ENCODE measurements at regions of chr1 and their contacts with region 1.

Region 1: GRCh38 chr1:207963427-207964194 is 52.7 kb upstream of the CD34 start:
- DNase-seq: peak; percentile 79 to 88 (median 81)
- H3K4me3 ChIP-seq: peak overlapping the region; percentile 74
- H3K4me3 Mint-ChIP-seq: peak overlapping the region; percentile 75 to 89 (median 87)
- H3K27ac ChIP-seq: peak overlapping the region; percentile 65
- H3K27ac Mint-ChIP-seq: peak overlapping the region in 5 of 8 donors; percentile 52 to 89 (median 70)
- H3K4me1 ChIP-seq: peaks cover 5% of the 10 kb centered on the region
- H3K4me1 Mint-ChIP-seq: peaks cover 11 to 22% (median 14%) of the 10 kb centered on the region in 3 donors
- H3K27me3 ChIP-seq: peaks cover 12% of the 10 kb centered on the region
- H3K27me3 Mint-ChIP-seq: peaks cover 14 to 26% of the 10 kb centered on the region in 2 donors

Region 2: GRCh38 chr1:207797229-207797961 is 166.2 kb before region 1 on chr1:
- CTCF ChIA-PET with region 1: interaction called, 26 read pairs
- POLR2A ChIA-PET with region 1: no interaction called
- DNase-seq: peak; percentile 39 to 82 (median 55)
- H3K4me3 ChIP-seq: no peak overlapping the region
- H3K4me3 Mint-ChIP-seq: no peak overlapping the region
- H3K27ac ChIP-seq: no peak overlapping the region
- H3K27ac Mint-ChIP-seq: peak overlapping the region in 2 of 8 donors; percentile 6 to 40
- H3K4me1 ChIP-seq: peaks cover 23% of the 10 kb centered on the region
- H3K4me1 Mint-ChIP-seq: peaks cover 41 to 51% (median 48%) of the 10 kb centered on the region in 3 donors
- H3K27me3 ChIP-seq: no peaks in the 10 kb centered on the region
- H3K27me3 Mint-ChIP-seq: no peaks in the 10 kb centered on the region

Region 3: GRCh38 chr1:207868774-207869721 is 94.6 kb before region 1 on chr1:
- CTCF ChIA-PET with region 1: interaction called, 20 read pairs
- POLR2A ChIA-PET with region 1: no interaction called
- DNase-seq: peak; percentile 66 to 81 (median 74)
- H3K4me3 ChIP-seq: peak overlapping the region; percentile 71
- H3K4me3 Mint-ChIP-seq: peak overlapping the region; percentile 93 to 98 (median 96)
- H3K27ac ChIP-seq: peak overlapping the region; percentile 83
- H3K27ac Mint-ChIP-seq: peak overlapping the region; percentile 66 to 97 (median 92)
- H3K4me1 ChIP-seq: peaks cover 84% of the 10 kb centered on the region
- H3K4me1 Mint-ChIP-seq: peaks cover 47 to 84% (median 48%) of the 10 kb centered on the region in 3 donors
- H3K27me3 ChIP-seq: no peaks in the 10 kb centered on the region
- H3K27me3 Mint-ChIP-seq: peaks cover 0 to 1% of the 10 kb centered on the region in 2 donors

Region 4: DNA sequence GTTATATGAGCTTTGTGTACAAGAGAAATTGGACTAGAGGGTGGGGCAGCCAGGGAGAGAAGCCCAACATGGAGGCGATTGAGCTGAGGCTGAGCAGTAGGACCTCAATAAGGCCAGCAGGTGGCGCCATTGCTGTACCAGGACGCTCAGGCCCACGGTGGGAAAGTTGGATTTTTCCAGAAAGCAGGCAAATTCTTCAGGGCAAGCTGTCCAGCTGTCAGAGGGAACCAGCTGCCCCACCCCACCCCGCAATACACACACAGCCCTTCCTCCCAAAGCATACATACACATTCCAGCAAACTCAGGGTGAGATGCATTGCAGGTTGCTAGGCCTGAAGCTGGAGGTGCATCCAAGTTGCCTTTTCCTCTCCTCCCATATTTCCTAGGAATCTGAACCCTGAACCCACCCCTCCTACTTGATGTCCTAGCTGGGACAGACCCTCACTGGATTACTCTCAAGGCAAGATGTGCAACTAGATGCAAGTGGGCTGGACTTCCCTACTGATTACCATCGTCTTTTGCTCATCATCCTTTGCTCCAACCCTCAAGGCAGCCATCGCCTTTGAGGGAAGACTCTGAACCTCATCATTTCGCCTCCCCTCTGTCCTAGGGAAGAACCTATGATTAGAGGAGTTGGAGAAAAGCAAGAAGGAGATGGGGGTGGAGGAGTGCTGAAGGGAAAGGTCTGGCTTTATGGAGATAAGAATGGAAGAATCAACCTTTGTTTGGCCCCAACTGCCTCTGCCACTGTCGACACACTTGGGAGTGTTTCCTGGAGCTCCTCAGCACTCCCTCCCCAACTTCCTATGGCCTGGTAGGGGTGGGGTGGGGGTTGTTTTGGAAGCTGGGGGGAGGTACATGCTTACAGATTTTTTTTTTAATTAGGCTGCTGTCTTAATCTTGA is 78.2 kb before region 1 on chr1:
- CTCF ChIA-PET with region 1: interaction called, 92 read pairs
- POLR2A ChIA-PET with region 1: interaction called, 4 read pairs
- DNase-seq: peak; percentile 58 to 79 (median 61)
- H3K4me3 ChIP-seq: no peak overlapping the region
- H3K4me3 Mint-ChIP-seq: peak overlapping the region in 3 of 7 donors; percentile 10 to 36 (median 21)
- H3K27ac ChIP-seq: no peak overlapping the region
- H3K27ac Mint-ChIP-seq: peak overlapping the region in 7 of 8 donors; percentile 59 to 96 (median 79)
- H3K4me1 ChIP-seq: peaks cover 28% of the 10 kb centered on the region
- H3K4me1 Mint-ChIP-seq: peaks cover 33 to 38% (median 37%) of the 10 kb centered on the region in 3 donors
- H3K27me3 ChIP-seq: no peaks in the 10 kb centered on the region
- H3K27me3 Mint-ChIP-seq: peaks cover 8 to 18% of the 10 kb centered on the region in 2 donors

Region 5: DNA sequence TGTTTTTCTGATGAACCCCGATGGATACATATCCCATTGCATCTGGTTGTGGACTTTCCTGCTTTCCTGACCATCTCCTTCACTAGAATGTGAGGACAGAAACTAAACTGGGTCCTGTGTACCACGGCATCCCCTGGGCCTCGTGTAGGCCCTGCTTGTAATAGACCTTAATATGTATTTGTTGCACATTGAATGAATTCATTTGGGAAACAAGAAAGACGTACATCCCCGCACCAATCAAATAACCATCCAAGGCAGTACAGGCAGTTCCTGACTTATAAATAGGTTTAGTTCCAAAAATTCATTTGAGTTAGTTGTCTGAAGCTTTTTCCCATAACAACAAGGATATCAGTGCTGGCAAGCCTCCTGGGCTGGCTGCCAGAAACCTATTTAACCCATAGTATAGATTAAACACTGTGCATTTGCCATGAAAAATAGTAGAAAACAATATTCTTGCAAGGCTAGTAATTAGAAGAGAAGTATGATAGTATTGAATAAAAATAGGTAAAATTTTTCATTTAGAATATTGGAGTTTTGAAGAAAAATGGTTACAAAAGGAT is 29.1 kb after region 1 on chr1:
- CTCF ChIA-PET with region 1: no interaction called
- POLR2A ChIA-PET with region 1: no interaction called
- DNase-seq: no peak
- H3K4me3 ChIP-seq: no peak overlapping the region
- H3K4me3 Mint-ChIP-seq: no peak overlapping the region
- H3K27ac ChIP-seq: no peak overlapping the region
- H3K27ac Mint-ChIP-seq: no peak overlapping the region
- H3K4me1 ChIP-seq: no peaks in the 10 kb centered on the region
- H3K4me1 Mint-ChIP-seq: no peaks in the 10 kb centered on the region
- H3K27me3 ChIP-seq: no peaks in the 10 kb centered on the region
- H3K27me3 Mint-ChIP-seq: peaks cover 13 to 37% of the 10 kb centered on the region in 2 donors

Measured in CD8-positive, alpha-beta memory T cell (primary cell).